Vagina (tissue), 2 donors: ENCODE measurements at regions of chr6 and their contacts with region 1.

Region 1: DNA sequence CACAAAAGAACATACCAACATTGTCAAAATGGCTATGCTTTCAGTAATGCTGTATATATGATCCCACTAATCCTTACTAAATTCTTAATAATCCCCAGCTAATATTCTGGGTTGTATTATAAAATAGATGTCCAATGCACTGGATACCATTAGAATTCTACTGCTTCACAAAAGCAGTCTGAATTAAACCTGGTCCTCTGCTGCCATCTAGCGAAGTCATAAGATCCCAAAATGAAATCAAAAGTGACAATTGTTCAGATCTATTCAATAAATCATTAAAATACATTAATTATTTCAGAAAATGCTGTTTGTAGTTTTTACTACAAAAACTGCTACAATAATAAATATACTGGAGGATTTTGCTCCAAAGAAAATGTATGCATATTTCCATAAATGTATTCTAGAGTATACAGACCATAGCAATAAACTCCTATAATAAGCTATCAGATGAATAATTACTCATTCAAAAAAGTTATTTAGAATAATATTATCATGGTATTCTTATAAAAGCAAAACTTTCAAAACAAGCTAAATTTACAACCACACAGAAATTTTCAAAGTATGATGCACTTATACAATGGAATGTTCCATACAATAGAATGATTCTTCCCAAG is 92.6 kb downstream of the RNGTT start:
- DNase-seq: no peak
- H3K4me3 ChIP-seq: no peak overlapping the region
- H3K27ac ChIP-seq: no peak overlapping the region
- H3K4me1 ChIP-seq: no peaks in the 10 kb centered on the region
- H3K27me3 ChIP-seq: no peaks in the 10 kb centered on the region
- CTCF ChIP-seq: peak in 2 of 3 experiments; percentile 57 to 67
- POLR2A ChIP-seq: no peak

Region 2: DNA sequence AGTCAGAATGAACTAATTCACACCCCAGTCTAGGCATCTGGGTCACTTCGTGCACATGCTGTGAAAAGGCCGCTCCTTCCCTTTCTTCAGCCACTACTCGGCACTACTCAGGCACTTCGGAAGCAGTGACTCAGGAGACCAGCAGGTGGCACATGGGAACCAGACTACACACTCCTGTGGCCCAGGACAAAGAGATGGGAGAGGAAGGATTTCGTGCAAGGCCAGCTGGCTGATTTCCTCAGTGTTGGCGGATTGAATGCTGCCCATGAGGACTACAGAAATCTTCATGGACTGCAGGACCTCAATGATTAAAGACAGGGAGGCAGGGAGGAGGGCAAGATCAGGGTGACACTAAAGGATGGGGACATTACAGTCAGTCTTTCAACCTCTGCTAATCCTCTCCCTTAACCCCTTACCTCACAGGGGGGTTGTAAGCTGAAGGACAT is 941.0 kb before region 1 on chr6:
- intact Hi-C with region 1: loop called (anchors 5 kb)
- DNase-seq: no peak
- H3K4me3 ChIP-seq: no peak overlapping the region
- H3K27ac ChIP-seq: no peak overlapping the region
- H3K4me1 ChIP-seq: no peaks in the 10 kb centered on the region
- H3K27me3 ChIP-seq: no peaks in the 10 kb centered on the region
- CTCF ChIP-seq: peak; percentile 44 to 78 (median 58)
- POLR2A ChIP-seq: no peak